Activated CD8-positive, alpha-beta T cell treated with anti-CD3 and anti-CD28 coated beads for 36 hours (primary cell): ENCODE measurements at regions of chr7 and their contacts with region 1.

Region 1: DNA sequence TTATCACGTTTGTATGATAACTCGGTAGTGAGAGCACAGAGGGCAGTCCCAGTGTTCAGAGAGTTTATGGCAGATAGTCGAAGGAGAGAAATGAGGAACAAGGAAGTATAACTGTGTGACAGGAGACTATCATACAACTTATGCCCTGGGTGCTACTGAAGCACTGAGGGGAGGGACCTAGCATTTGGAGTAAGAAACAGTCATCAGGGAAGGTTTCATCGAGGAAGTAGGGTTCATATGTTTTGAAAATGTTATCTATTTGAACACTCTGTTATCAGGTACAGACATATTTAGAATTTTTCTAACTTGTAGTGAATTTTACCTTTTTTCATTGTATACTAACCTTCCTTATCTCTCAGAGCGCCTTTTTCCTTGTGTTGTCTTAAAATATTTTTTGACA is 1214.4 kb upstream of the C7orf33 start:
- DNase-seq: no peak
- ATAC-seq: no peak
- H3K4me3 Mint-ChIP-seq: no peak overlapping the region
- H3K27ac Mint-ChIP-seq: no peak overlapping the region
- H3K4me1 Mint-ChIP-seq: no peaks in the 10 kb centered on the region
- H3K27me3 Mint-ChIP-seq: no peaks in the 10 kb centered on the region
- CTCF ChIP-seq: no peak

Region 2: GRCh38 chr7:147394329-147394728 is 18.1 kb after region 1 on chr7:
- CTCF ChIA-PET with region 1: no interaction called
- POLR2A ChIA-PET with region 1: no interaction called
- intact Hi-C with region 1: loop called (anchors 2 kb)
- DNase-seq: no peak
- ATAC-seq: no peak
- H3K4me3 Mint-ChIP-seq: no peak overlapping the region
- H3K27ac Mint-ChIP-seq: no peak overlapping the region
- H3K4me1 Mint-ChIP-seq: no peaks in the 10 kb centered on the region
- H3K27me3 Mint-ChIP-seq: no peaks in the 10 kb centered on the region
- CTCF ChIP-seq: no peak

Region 3: GRCh38 chr7:147452816-147453215 is 76.6 kb after region 1 on chr7:
- CTCF ChIA-PET with region 1: no interaction called
- POLR2A ChIA-PET with region 1: no interaction called
- intact Hi-C with region 1: no loop called
- DNase-seq: no peak
- ATAC-seq: no peak
- H3K4me3 Mint-ChIP-seq: no peak overlapping the region
- H3K27ac Mint-ChIP-seq: no peak overlapping the region
- H3K4me1 Mint-ChIP-seq: no peaks in the 10 kb centered on the region
- H3K27me3 Mint-ChIP-seq: no peaks in the 10 kb centered on the region
- CTCF ChIP-seq: no peak

Region 4: DNA sequence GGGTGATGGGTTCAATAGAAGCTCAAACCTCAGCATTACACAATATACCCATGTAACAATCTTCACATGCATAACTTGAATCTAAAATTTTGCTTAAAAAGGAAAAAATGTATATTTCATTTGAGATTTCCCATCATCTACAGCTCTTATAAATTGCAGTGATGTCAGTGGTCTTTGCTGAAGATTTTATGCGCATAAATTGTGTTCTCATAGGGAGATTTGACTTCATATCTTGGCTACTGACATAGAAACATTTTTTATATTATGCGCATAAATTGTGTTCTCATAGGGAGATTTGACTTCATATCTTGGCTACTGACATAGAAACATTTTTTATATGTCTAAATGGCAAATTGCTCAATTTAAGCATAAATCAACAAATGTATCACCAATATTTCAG is 89.0 kb after region 1 on chr7:
- CTCF ChIA-PET with region 1: no interaction called
- POLR2A ChIA-PET with region 1: no interaction called
- intact Hi-C with region 1: no loop called
- DNase-seq: no peak
- ATAC-seq: no peak
- H3K4me3 Mint-ChIP-seq: no peak overlapping the region
- H3K27ac Mint-ChIP-seq: no peak overlapping the region
- H3K4me1 Mint-ChIP-seq: no peaks in the 10 kb centered on the region
- H3K27me3 Mint-ChIP-seq: no peaks in the 10 kb centered on the region
- CTCF ChIP-seq: no peak

Region 5: GRCh38 chr7:147570390-147570789 is 194.2 kb after region 1 on chr7:
- CTCF ChIA-PET with region 1: no interaction called
- POLR2A ChIA-PET with region 1: no interaction called
- intact Hi-C with region 1: no loop called
- DNase-seq: no peak
- ATAC-seq: no peak
- H3K4me3 Mint-ChIP-seq: no peak overlapping the region
- H3K27ac Mint-ChIP-seq: no peak overlapping the region
- H3K4me1 Mint-ChIP-seq: no peaks in the 10 kb centered on the region
- H3K27me3 Mint-ChIP-seq: no peaks in the 10 kb centered on the region
- CTCF ChIP-seq: no peak